Thyroid gland (tissue), 4 donors: ENCODE measurements at regions of chr17 and their contacts with region 1.

Region 1: DNA sequence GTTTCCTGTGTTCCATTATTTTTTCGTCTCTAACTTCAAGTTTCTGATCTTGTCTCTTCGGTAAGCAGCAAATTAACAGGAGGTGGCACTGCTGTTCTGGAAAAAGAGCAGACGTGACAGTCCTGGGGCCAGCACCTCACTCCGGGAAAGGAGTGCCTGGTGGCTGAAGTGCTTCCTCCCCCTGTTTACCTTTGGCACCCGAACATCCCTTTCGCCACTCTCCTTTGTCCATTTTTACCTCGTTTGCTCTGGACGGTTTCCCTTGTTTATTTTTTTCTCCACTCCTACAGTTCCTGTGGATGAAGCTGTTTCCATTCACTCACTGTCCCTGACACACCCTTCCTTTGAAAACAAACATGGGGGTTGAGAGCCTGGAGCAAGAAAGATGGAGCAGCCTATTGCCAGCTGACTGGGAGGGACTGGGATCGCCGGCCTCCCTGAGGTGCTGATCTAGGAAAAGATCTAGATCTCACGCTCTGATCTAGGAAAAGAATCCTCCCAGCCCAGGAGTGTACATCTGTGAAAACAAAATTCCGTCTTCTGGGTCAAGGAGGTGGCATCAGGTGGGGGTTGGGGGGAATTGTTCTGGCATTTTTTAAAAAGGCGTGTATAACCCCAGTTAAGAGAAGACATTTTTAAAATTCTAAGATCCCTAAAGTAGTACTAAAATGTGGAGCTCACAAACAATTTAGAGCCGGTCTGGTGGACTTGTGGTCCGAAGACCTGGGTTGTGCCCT is 12.7 kb downstream of the SAP30BP start:
- DNase-seq: peak; percentile 13 to 32
- H3K4me3 ChIP-seq: no peak overlapping the region
- H3K27ac ChIP-seq: peak overlapping the region in 2 of 3 donors; percentile 49 to 59
- H3K4me1 ChIP-seq: peaks cover 0 to 22% of the 10 kb centered on the region in 2 donors
- H3K27me3 ChIP-seq: no peaks in the 10 kb centered on the region
- CTCF ChIP-seq: peak in 4 of 6 experiments; percentile 11 to 35 (median 24)
- POLR2A ChIP-seq: no peak

Region 2: DNA sequence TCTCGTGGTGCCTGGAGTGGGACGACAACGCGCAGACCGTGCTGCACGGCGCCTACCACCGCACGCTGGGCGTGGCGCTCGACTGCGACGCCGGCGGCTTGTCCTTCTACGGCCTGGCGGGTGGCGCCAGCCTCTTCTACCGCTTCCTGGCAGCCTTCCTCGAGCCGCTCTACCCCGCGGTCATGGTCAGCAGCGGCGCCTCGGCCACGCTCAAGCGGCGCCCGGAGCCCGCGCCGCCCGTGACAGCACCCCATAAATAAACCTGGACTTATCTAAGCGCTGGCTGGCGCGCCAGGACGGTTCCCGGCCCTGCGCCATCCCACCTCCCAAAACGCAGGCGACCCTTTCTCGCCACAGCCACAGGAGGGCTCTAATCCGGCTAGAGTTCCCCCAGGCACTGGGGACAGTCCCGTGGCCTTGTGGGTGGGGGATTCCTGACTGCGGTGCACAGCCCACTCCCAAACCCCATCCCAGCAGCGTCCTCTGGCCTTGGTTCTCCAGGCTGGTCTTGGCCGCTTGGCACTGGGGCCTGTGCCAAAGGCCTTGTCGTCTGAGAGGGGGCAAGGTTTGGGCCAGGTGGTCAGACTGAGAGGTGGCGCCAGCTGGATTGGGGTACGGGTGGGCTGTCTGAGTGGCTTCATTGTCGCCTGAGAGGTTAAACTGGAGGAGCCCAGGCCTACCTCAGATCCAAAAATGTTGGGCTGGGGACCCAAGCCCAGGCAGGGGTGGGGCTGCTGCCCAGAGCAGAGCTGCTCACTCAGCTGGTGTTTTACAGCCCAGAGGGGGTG is 602.2 kb before region 1 on chr17:
- intact Hi-C with region 1: no loop called
- DNase-seq: peak; percentile 87 to 88
- H3K4me3 ChIP-seq: peak overlapping the region in 2 of 3 donors; percentile 4 to 23
- H3K27ac ChIP-seq: peak overlapping the region; percentile 73 to 82 (median 75)
- H3K4me1 ChIP-seq: peaks cover 11 to 30% of the 10 kb centered on the region in 2 donors
- H3K27me3 ChIP-seq: no peaks in the 10 kb centered on the region
- CTCF ChIP-seq: peak in 4 of 6 experiments; percentile 7 to 12 (median 12)
- POLR2A ChIP-seq: peak in 1 of 2 donors; percentile 38

Region 3: GRCh38 chr17:75574416-75575036 is 105.3 kb before region 1 on chr17:
- intact Hi-C with region 1: no loop called
- DNase-seq: no peak
- H3K4me3 ChIP-seq: no peak overlapping the region
- H3K27ac ChIP-seq: no peak overlapping the region
- H3K4me1 ChIP-seq: peaks cover 7% of the 10 kb centered on the region in 2 donors
- H3K27me3 ChIP-seq: no peaks in the 10 kb centered on the region
- CTCF ChIP-seq: no peak
- POLR2A ChIP-seq: no peak

Region 4: DNA sequence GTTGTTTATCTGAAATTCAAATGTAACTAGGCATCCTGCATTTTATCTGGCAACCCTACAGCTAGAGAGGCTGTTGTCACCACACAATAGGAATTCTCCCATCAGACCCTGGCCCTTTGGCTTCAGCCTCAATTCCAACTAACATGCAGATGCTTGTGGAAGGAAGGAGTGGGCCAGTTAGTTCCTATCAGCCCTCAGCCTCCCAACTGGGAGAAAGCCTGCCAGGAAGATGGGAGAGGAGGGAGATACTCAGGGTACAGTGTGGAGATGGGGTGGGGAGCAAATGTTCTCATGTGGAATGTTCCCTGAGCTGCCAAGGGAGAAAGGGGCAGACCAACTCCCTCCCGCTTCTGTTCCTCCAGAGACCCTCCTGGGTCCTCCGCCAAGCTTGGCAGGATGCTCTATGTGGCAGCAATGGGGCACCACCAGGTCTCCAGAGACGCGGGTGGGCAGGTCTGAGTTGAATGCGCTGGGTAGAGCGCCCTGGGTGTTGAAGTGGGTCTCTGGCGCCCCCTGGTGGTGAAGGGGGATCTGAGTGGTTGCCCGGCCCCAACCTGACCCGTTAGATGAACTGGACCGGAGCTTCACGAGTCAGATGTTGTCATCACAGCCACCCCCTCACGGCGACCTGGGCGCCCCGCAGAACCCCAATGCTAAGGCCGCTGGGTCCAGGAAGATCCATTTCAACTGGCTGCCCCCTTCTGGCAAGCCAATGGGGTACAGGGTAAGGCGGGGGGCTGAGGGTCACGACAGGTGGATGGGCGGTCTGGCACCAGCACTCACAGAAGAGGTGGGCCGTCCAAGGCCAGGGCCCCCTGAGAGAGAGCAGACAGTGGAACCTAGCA is 69.9 kb after region 1 on chr17:
- intact Hi-C with region 1: loop called (anchors 2 kb)
- DNase-seq: peak; percentile 85 to 89
- H3K4me3 ChIP-seq: no peak overlapping the region
- H3K27ac ChIP-seq: no peak overlapping the region
- H3K4me1 ChIP-seq: peaks cover 15 to 30% of the 10 kb centered on the region in 2 donors
- H3K27me3 ChIP-seq: no peaks in the 10 kb centered on the region
- CTCF ChIP-seq: peak; percentile 72 to 98 (median 88)
- POLR2A ChIP-seq: no peak